ENCODE measurements at regions of chr9 and their contacts with region 1.

Region 1: GRCh38 chr9:131334629-131335367 is 45.3 kb downstream of the PLPP7 start:
- DNase-seq: peak in 4 of 5 donors; percentile 36 to 56 (median 44)
- H3K4me3 ChIP-seq: no peak overlapping the region
- H3K27ac ChIP-seq: no peak overlapping the region
- H3K4me1 ChIP-seq: peaks cover 6% of the 10 kb centered on the region
- H3K27me3 ChIP-seq: no peaks in the 10 kb centered on the region
- CTCF ChIP-seq: no peak
- EP300 ChIP-seq: no peak
- POLR2A ChIP-seq: no peak

Region 2: DNA sequence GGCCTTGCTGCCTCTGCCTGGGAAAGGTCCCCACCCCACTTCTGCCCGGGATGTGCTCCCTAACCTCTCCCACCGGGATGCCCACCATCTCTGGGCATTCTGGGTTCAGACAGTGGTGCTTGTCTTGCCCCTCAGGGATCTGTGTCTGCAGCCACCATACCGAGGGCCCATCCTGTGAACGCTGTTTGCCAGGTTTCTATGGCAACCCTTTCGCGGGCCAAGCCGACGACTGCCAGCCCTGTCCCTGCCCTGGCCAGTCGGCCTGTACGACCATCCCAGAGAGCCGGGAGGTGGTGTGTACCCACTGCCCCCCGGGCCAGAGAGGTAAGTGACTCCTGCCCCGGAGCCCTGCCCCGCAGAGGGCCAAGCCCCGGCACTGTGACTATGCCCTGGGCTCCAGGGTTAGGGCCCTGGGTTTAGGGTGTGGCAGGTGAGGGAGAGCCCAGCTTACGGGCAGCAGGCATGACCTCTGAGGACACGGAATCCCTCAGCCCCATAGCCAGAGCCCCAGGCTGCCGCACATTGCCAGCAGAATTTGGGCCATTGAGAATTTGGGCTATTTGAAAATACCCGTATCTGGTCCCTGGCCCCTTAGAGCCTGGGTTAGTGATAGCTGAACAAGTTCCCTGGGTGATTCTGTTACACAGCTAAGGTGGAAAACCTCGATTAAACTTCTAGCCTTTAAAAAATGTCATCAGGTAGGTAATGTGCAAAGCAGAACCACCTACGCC is 273.7 kb before region 1 on chr9:
- intact Hi-C with region 1: loop called (anchors 2 to 10 kb)
- DNase-seq: no peak
- H3K4me3 ChIP-seq: no peak overlapping the region
- H3K27ac ChIP-seq: no peak overlapping the region
- H3K4me1 ChIP-seq: no peaks in the 10 kb centered on the region
- H3K27me3 ChIP-seq: no peaks in the 10 kb centered on the region
- CTCF ChIP-seq: no peak
- EP300 ChIP-seq: no peak
- POLR2A ChIP-seq: no peak

Region 3: DNA sequence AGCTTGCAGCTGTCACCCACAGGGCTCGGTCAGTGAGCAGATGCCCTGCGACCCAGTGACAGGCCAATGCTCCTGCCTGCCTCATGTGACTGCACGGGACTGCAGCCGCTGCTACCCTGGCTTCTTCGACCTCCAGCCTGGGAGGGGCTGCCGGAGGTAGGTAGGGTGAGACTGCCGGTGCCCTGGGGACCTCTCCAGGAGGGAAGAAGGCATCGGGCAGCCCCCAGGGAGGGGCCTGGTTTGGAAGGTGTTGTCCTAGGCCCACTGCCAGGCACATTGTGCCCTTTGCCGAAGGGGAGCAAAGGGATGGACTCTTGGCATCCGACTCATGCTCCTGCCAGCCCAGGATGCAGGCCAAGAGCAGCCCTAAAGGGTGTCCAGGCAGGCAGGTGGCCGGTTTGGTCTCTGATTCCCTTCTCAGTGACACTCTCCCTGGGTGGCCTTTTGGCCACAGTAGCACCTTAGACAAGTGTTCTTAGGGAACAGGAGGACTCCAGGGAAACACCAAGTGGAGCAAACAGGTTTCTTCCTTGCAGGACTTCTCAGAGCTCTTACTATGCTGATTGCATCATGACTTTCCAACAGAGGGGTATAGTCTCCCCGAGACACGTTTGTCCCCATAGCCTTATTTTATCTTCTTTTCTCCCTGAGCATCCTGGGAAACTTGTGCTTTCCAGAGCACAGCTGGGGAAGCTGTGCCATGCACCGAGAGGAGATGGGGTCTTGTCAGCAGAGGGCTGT is 266.6 kb before region 1 on chr9:
- intact Hi-C with region 1: loop called in 2 of 4 experiments (anchors 5 to 10 kb)
- DNase-seq: no peak
- H3K4me3 ChIP-seq: no peak overlapping the region
- H3K27ac ChIP-seq: no peak overlapping the region
- H3K4me1 ChIP-seq: no peaks in the 10 kb centered on the region
- H3K27me3 ChIP-seq: no peaks in the 10 kb centered on the region
- CTCF ChIP-seq: no peak
- EP300 ChIP-seq: no peak
- POLR2A ChIP-seq: no peak

Region 4: GRCh38 chr9:131125128-131126058 is 209.4 kb before region 1 on chr9 and contains the start of gene NUP214:
- intact Hi-C with region 1: no loop called
- DNase-seq: peak; percentile 98 to 100 (median 99)
- H3K4me3 ChIP-seq: peak within 1 kb of the TSS; percentile 81
- H3K27ac ChIP-seq: peak within 1 kb of the TSS in 1 of 2 donors; percentile 46
- H3K4me1 ChIP-seq: peaks cover 6% of the 10 kb centered on the region
- H3K27me3 ChIP-seq: no peaks in the 10 kb centered on the region
- CTCF ChIP-seq: no peak
- EP300 ChIP-seq: no peak
- POLR2A ChIP-seq: peak; percentile 81
- total RNA-seq, gene NUP214: 33.7 to 55.0 (median 46.6) TPM

Region 5: GRCh38 chr9:131178382-131178781 is 156.4 kb before region 1 on chr9:
- intact Hi-C with region 1: loop called (anchors 2 to 5 kb)
- DNase-seq: peak; percentile 49 to 73 (median 62)
- H3K4me3 ChIP-seq: no peak overlapping the region
- H3K27ac ChIP-seq: no peak overlapping the region
- H3K4me1 ChIP-seq: peaks cover 10% of the 10 kb centered on the region
- H3K27me3 ChIP-seq: no peaks in the 10 kb centered on the region
- CTCF ChIP-seq: peak; percentile 47 to 72 (median 57)
- EP300 ChIP-seq: no peak
- POLR2A ChIP-seq: no peak

Region 6: DNA sequence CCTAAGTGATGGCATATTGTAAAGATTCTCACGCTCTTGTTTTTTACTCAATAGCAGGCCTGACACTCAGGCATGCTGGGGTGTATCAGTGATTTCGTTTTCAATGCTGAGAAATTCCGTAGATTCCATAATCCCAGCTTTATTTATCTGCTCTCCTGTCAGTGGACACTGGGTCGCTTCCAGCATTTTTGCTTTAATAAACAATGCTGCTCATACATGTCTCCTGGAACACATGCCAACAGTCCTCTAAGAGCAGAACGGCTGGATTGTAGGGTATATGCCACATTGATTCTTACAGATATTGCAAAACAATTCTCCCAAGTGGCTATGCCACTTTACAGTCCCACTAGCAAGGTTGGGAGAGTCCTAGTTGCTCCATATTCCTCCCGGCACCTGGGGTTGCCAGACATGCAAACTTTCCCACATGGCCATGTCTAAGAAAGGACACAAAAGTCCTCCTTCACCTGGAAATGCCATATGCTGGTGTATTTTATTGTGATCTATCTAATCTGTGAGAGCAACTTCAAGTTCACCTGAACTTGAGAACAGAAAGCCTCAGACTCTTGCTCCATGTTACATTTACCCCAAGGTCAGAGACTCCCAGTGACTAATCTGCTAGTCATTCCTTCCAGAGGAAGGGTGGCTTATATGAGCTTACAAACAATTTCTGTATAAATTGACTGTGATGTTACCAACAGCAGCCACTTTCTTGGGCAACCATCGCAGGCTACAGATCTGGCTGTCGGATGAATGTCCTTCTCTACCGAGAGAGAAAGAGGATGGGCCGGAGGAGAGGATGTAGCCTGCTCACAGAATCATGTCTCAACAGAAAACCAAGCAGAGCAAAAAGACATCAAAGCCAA is 323.3 kb after region 1 on chr9:
- intact Hi-C with region 1: no loop called
- DNase-seq: no peak
- H3K4me3 ChIP-seq: no peak overlapping the region
- H3K27ac ChIP-seq: peak overlapping the region in 1 of 2 donors; percentile 3
- H3K4me1 ChIP-seq: peaks cover 19% of the 10 kb centered on the region
- H3K27me3 ChIP-seq: no peaks in the 10 kb centered on the region
- CTCF ChIP-seq: no peak
- EP300 ChIP-seq: no peak
- POLR2A ChIP-seq: no peak

Region 7: GRCh38 chr9:131960871-131961495 is 626.2 kb after region 1 on chr9:
- intact Hi-C with region 1: no loop called
- DNase-seq: no peak
- H3K4me3 ChIP-seq: no peak overlapping the region
- H3K27ac ChIP-seq: no peak overlapping the region
- H3K4me1 ChIP-seq: no peaks in the 10 kb centered on the region
- H3K27me3 ChIP-seq: no peaks in the 10 kb centered on the region
- CTCF ChIP-seq: no peak
- EP300 ChIP-seq: no peak
- POLR2A ChIP-seq: no peak

Region 8: DNA sequence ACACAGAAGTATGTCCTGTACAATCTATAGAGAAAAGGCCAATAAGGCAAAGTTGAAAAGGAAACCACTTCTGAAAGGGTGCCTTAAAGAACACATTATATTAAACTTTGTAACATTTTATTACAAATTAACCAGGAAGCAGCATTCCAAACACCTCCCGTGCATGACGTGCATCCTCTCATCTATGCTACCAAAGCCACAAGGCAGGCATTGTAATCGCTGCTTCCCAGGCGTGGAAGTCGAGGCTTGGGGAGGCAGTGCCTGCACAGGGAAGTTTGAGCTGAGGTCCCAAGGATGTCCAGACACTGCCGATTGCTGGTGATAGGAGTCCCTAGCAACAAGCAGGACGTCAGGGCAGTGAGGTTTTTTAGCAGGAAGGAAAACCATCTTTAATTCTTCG is 1203.3 kb after region 1 on chr9:
- intact Hi-C with region 1: no loop called
- DNase-seq: no peak
- H3K4me3 ChIP-seq: no peak overlapping the region
- H3K27ac ChIP-seq: no peak overlapping the region
- H3K4me1 ChIP-seq: no peaks in the 10 kb centered on the region
- H3K27me3 ChIP-seq: no peaks in the 10 kb centered on the region
- CTCF ChIP-seq: no peak
- EP300 ChIP-seq: no peak
- POLR2A ChIP-seq: no peak